ENCODE measurements at regions of chr19 and their contacts with region 1.

Region 1: GRCh38 chr19:45770192-45771101 is 1.4 kb upstream of the SIX5 start:
- DNase-seq: peak; percentile 99 to 100
- ATAC-seq: peak; percentile 49 to 83
- H3K4me3 ChIP-seq: peak overlapping the region; percentile 45
- H3K27ac ChIP-seq: peak overlapping the region; percentile 71 to 87
- H3K4me1 ChIP-seq: peaks cover 18% of the 10 kb centered on the region
- CTCF ChIP-seq: peak; percentile 96
- EP300 ChIP-seq: no peak
- POLR2A ChIP-seq: peak; percentile 32
- RAD21 ChIP-seq: peak; percentile 78 to 92

Region 2: GRCh38 chr19:45478454-45479238 is 291.8 kb before region 1 on chr19:
- CTCF ChIA-PET with region 1: no interaction called
- POLR2A ChIA-PET with region 1: no interaction called
- DNase-seq: peak; percentile 89 to 99
- ATAC-seq: peak; percentile 69 to 80
- H3K4me3 ChIP-seq: peak overlapping the region; percentile 42
- H3K27ac ChIP-seq: peak overlapping the region; percentile 81 to 89
- H3K4me1 ChIP-seq: peaks cover 13% of the 10 kb centered on the region
- CTCF ChIP-seq: peak; percentile 99
- EP300 ChIP-seq: no peak
- POLR2A ChIP-seq: no peak
- RAD21 ChIP-seq: peak; percentile 98 to 99

Region 3: GRCh38 chr19:45717166-45717982 is 53.1 kb before region 1 on chr19:
- CTCF ChIA-PET with region 1: interaction called, 43 read pairs
- POLR2A ChIA-PET with region 1: interaction called, 67 read pairs
- DNase-seq: peak; percentile 99 to 100
- ATAC-seq: peak; percentile 92 to 97
- H3K4me3 ChIP-seq: peak overlapping the region; percentile 80
- H3K27ac ChIP-seq: peak overlapping the region; percentile 92 to 96
- H3K4me1 ChIP-seq: peaks cover 39% of the 10 kb centered on the region
- CTCF ChIP-seq: no peak; the same call in 2 of the 3 replicates
- EP300 ChIP-seq: peak in 1 of 2 experiments; percentile 42; a peak in 1 of 5 replicates
- POLR2A ChIP-seq: peak; percentile 41
- RAD21 ChIP-seq: no peak

Region 4: GRCh38 chr19:45739498-45740439 is 30.7 kb before region 1 on chr19:
- CTCF ChIA-PET with region 1: interaction called, 25 read pairs
- POLR2A ChIA-PET with region 1: interaction called, 6 read pairs
- DNase-seq: peak in 1 of 2 experiments; percentile 55
- ATAC-seq: peak; percentile 48 to 64; a peak in 3 of 6 replicates
- H3K4me3 ChIP-seq: no peak overlapping the region
- H3K27ac ChIP-seq: no peak overlapping the region
- H3K4me1 ChIP-seq: peaks cover 7% of the 10 kb centered on the region; the same call in 1 of the 3 replicates
- CTCF ChIP-seq: no peak
- EP300 ChIP-seq: no peak
- POLR2A ChIP-seq: no peak
- RAD21 ChIP-seq: no peak

Region 5: GRCh38 chr19:45792470-45793177 is 22.2 kb after region 1 on chr19 and contains the start of gene DMWD:
- CTCF ChIA-PET with region 1: interaction called, 2,204 read pairs
- POLR2A ChIA-PET with region 1: interaction called, 43 read pairs
- DNase-seq: peak; percentile 90 to 99
- ATAC-seq: peak; percentile 90 to 93
- H3K4me3 ChIP-seq: peak within 1 kb of the TSS; percentile 97
- H3K27ac ChIP-seq: peak within 1 kb of the TSS; percentile 87 to 98
- H3K4me1 ChIP-seq: peaks cover 19% of the 10 kb centered on the region
- CTCF ChIP-seq: no peak
- EP300 ChIP-seq: no peak
- POLR2A ChIP-seq: peak; percentile 86
- RAD21 ChIP-seq: no peak
- polyA plus RNA-seq, gene DMWD: 17.1 and 17.5 TPM in 2 replicates

Region 6: DNA sequence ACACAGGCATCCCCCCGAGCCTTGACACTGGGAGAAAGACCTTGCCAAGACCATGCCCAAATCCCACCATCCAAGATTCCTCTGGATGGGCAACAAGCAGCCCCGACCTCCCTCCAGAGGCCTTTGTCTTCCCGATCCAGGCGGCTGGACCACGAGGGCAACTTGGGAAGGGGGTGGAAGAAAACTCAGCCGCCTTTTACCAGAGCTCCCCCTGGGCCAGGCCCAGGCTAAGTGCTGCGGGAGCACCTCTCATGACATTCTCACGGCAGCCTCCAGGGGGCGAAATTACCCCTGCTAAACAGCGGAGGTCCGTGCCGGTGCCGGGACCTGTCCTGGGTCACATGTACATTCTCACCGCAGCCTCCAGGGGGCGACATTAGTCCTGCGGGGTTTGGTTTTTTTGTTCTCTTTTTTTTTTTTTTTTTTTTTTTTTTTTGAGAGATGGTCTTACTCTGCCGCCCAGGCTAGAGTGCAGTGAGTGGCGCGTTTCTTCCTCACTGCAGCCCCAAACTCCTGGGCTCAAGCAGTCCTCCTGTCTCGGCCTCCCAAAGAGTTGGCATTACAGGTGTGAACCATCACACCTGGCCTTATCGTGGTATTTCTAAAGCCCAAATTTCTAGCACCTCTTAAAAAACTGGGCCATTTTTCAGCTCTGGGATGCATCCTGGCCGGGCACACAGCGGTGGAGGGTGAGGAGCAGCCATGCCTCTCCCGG is 46.7 kb after region 1 on chr19:
- CTCF ChIA-PET with region 1: interaction called, 2,204 read pairs
- POLR2A ChIA-PET with region 1: interaction called, 4 read pairs
- DNase-seq: peak; percentile 96 to 100
- ATAC-seq: peak; percentile 63 to 93
- H3K4me3 ChIP-seq: no peak overlapping the region
- H3K27ac ChIP-seq: peak overlapping the region in 1 of 2 experiments; percentile 61; a peak in 3 of 6 replicates
- H3K4me1 ChIP-seq: peaks cover 10% of the 10 kb centered on the region; the same call in 1 of the 3 replicates
- CTCF ChIP-seq: peak; percentile 100
- EP300 ChIP-seq: no peak
- POLR2A ChIP-seq: no peak
- RAD21 ChIP-seq: peak; percentile 80 to 85